Activated CD4-positive, alpha-beta memory T cell treated with anti-CD3 and anti-CD28 coated beads, Interleukin-2, amount 10 ng/mL, durations not matched to agents 7 days and 5 days (primary cell): ENCODE measurements at regions of chr4 and their contacts with region 1.

Region 1: GRCh38 chr4:98658287-98659105 is at the start of gene TSPAN5:
- DNase-seq: peak; percentile 83
- H3K4me3 Mint-ChIP-seq: peak within 1 kb of the TSS; percentile 93
- H3K27ac Mint-ChIP-seq: peak within 1 kb of the TSS; percentile 74
- H3K4me1 Mint-ChIP-seq: peaks cover 75% of the 10 kb centered on the region
- H3K27me3 Mint-ChIP-seq: no peaks in the 10 kb centered on the region
- total RNA-seq, gene TSPAN5: 21.8 to 22.6 TPM

Region 2: GRCh38 chr4:98448908-98449307 is 209.6 kb before region 1 on chr4:
- CTCF ChIA-PET with region 1: no interaction called
- POLR2A ChIA-PET with region 1: no interaction called
- DNase-seq: peak; percentile 65
- H3K4me3 Mint-ChIP-seq: no peak overlapping the region
- H3K27ac Mint-ChIP-seq: peak overlapping the region; percentile 6
- H3K4me1 Mint-ChIP-seq: peaks cover 51% of the 10 kb centered on the region
- H3K27me3 Mint-ChIP-seq: no peaks in the 10 kb centered on the region

Region 3: GRCh38 chr4:98601708-98602107 is 56.8 kb before region 1 on chr4:
- CTCF ChIA-PET with region 1: no interaction called
- POLR2A ChIA-PET with region 1: interaction called, 10 read pairs
- DNase-seq: peak; percentile 21
- H3K4me3 Mint-ChIP-seq: peak overlapping the region; percentile 15
- H3K27ac Mint-ChIP-seq: peak overlapping the region; percentile 32
- H3K4me1 Mint-ChIP-seq: peaks cover 42% of the 10 kb centered on the region
- H3K27me3 Mint-ChIP-seq: peaks cover 2% of the 10 kb centered on the region

Region 4: GRCh38 chr4:98639523-98639922 is 19.0 kb before region 1 on chr4:
- CTCF ChIA-PET with region 1: interaction called, 7 read pairs
- POLR2A ChIA-PET with region 1: interaction called, 14 read pairs
- DNase-seq: no peak
- H3K4me3 Mint-ChIP-seq: peak overlapping the region; percentile 63
- H3K27ac Mint-ChIP-seq: peak overlapping the region; percentile 82
- H3K4me1 Mint-ChIP-seq: peaks cover 46% of the 10 kb centered on the region
- H3K27me3 Mint-ChIP-seq: no peaks in the 10 kb centered on the region

Region 5: DNA sequence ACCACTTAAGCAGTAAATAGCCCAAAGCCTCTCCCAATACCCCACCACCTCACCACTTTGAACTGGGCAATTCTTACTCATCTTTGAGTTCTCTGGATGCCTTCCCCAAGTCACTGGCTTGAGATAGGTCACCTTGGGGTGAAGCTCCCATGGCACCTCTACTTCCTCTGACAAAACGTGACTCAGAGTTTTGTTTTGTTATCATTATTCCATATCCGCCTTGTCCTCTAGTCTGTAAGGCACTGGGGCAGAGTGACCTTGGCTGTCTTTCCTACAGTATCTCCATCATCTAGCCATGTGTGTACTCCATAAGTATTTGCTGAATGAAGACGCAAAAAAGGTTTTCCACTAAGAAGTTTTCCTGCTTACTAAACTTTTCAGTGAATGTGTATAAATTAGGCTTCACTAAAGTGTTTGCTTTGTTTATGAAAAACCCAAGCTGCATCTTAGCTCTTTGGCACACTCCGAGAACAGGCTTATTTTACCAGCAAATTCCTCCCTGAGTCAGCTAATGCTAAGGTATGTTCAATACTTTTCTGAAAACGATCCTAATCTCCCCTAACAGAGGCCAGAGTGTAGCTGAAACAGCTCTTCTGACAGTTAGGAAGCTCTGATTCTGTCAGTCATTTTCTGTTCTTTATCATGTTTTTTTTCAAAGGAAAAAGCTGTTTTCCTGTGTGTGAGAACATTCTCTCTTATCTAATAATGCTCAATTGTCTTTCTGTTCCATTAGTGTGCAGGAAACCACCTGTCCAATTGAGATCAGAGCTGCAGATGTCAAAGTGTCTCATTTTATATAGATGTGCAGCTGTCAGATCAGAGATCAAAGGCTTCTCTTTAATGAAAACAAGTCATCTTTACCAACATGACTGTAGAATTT is 30.2 kb after region 1 on chr4:
- CTCF ChIA-PET with region 1: interaction called, 3 read pairs
- POLR2A ChIA-PET with region 1: interaction called, 17 read pairs
- DNase-seq: peak; percentile 45
- H3K4me3 Mint-ChIP-seq: no peak overlapping the region
- H3K27ac Mint-ChIP-seq: peak overlapping the region; percentile 5
- H3K4me1 Mint-ChIP-seq: peaks cover 25% of the 10 kb centered on the region
- H3K27me3 Mint-ChIP-seq: no peaks in the 10 kb centered on the region